PC-3 (cell line): ENCODE measurements at regions of chr20 and their contacts with region 1.

Region 1: DNA sequence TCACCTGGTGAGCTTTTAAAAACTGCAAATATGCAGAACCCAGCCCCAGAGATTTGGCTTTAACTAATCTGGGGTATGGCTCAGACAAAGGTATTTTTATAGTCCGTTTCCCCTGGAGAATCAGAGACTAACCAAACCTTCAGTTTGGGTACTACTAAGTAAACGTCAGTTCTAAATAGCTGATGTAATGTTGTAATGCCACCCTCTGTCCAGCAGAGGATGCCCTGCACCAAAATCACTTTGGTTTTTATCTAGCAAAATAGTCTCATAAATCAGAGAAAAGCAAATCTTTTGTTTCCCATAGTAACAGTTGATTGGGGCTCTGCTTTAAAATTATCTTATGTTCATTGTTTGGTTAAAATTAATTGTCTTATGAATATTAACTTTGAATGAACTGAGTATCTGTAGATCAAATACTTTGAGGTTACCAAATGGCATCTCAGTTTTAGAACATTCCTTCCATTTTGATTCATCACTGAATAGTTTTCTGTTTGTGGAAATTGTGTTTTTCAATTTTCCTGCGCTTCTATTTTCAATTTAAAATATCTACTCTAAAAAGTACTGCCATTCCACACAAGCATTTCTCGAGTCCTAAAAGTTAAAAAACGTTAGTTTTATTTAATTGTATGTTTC is 278.3 kb upstream of the PLCB4 start:
- DNase-seq: peak; percentile 81
- ATAC-seq: peak; percentile 70
- H3K4me3 ChIP-seq: no peak overlapping the region
- H3K27ac ChIP-seq: no peak overlapping the region
- H3K4me1 ChIP-seq: no peaks in the 10 kb centered on the region
- H3K27me3 ChIP-seq: no peaks in the 10 kb centered on the region
- CTCF ChIP-seq: peak; percentile 98

Region 2: GRCh38 chr20:9359561-9360308 is 569.2 kb after region 1 on chr20:
- CTCF ChIA-PET with region 1: interaction called, 4 read pairs
- POLR2A ChIA-PET with region 1: no interaction called
- intact Hi-C with region 1: loop called (anchors 1 kb)
- DNase-seq: peak; percentile 78
- ATAC-seq: peak; percentile 78
- H3K4me3 ChIP-seq: no peak overlapping the region
- H3K27ac ChIP-seq: no peak overlapping the region
- H3K4me1 ChIP-seq: no peaks in the 10 kb centered on the region
- H3K27me3 ChIP-seq: no peaks in the 10 kb centered on the region
- CTCF ChIP-seq: peak; percentile 85

Region 3: DNA sequence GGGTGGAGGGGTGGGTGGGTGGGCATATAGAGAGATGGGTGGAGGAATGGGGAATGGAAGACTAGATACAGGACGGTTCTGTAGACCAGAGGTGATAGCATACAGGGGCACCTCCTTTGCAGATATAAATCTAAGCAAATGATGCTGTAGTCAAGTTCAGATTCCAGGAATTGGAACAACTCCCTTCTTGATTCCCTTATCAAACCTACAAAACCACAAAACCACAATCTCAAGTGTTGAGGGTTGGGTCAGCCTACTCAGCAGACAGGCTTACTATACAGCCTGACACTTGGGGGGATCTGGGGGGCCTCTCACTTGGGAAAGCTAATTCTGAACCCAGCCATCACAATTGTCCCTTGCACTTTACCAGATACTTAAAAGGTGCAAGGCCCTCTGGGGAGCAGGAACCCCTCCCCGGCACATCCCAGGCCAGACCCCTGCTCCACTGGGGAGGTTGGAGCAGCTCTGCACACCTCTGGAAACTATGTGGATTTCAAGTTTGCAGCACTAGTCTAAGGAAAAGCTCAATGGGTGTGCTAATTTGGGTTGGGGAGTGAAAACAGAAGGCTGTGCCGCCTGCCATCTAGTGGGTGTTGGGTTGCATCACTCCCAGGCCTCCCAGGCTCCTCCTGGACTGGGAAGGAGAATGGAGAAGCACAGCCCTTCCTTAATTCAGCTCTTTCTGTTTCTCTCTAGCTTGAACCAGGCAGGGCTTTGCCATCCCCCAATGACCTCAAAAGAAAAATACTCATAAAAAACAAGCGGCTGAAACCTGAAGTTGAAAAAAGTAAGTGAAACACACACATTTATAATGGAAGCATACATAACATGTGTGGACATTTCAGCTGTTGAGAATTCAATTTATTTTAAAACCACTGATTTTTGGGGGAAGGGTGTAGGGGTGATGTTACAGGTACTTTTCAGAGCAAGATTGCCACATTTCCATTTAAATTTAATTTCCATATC is 602.6 kb after region 1 on chr20:
- CTCF ChIA-PET with region 1: interaction called, 9 read pairs
- POLR2A ChIA-PET with region 1: no interaction called
- intact Hi-C with region 1: loop called (anchors 1 kb)
- DNase-seq: peak; percentile 82
- ATAC-seq: peak; percentile 99
- H3K4me3 ChIP-seq: no peak overlapping the region
- H3K27ac ChIP-seq: no peak overlapping the region
- H3K4me1 ChIP-seq: no peaks in the 10 kb centered on the region
- H3K27me3 ChIP-seq: no peaks in the 10 kb centered on the region
- CTCF ChIP-seq: peak; percentile 93